ENCODE measurements at regions of chr19 and their contacts with region 1.

Region 1: GRCh38 chr19:2600914-2601870 is 101.3 kb downstream of the GNG7 start:
- DNase-seq: no peak
- H3K27ac ChIP-seq: peak overlapping the region; percentile 87
- CTCF ChIP-seq: no peak

Region 2: GRCh38 chr19:2636897-2637683 is 35.9 kb after region 1 on chr19:
- CTCF ChIA-PET with region 1: interaction called, 10 read pairs
- POLR2A ChIA-PET with region 1: no interaction called
- DNase-seq: peak; percentile 75
- H3K27ac ChIP-seq: peak overlapping the region; percentile 38
- CTCF ChIP-seq: peak; percentile 93

Measured in RWPE1 (cell line).